ENCODE measurements at regions of chr1 and their contacts with region 1.

Region 1: DNA sequence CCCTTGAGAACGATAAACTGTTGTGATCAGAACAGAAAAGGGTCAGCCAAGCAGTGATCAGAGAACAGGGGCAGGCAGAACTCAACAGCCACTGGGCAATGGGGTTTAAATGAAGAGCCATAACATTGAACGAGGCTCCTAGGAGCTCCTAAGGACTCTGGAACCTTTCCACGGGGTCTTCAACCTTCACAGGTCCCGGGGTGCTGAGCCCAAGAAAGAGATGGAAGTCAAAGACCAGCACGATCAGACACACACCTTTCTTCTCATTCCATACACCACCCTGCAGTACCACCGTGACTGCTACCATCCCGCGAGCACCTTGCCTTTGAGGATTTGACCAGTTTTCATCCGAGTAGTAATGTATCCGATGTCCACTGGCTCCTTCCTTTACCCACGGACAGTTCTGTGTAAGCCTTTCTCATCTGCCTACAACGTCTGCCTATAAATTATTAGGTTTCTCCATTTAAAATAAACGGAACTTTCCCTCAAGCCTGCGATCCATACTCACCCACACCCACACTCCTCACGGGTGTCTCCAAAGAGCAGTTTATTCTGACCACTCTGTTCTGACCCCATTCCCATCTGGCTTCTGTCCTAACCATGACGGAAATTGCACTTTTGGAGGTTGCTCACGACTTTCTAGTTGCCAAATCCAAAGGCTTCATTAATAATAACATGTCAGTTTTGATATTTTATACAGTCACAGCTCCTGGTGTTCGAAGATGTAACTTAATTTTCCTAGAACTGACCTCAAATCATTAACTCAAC is 16.8 kb upstream of the HHAT start:
- DNase-seq: no peak
- H3K4me3 ChIP-seq: peak overlapping the region in 1 of 3 donors; percentile 36
- H3K27ac ChIP-seq: peak overlapping the region in 1 of 3 donors; percentile 13
- H3K4me1 ChIP-seq: peaks cover 0 to 10% of the 10 kb centered on the region in 2 donors
- H3K27me3 ChIP-seq: no peaks in the 10 kb centered on the region
- CTCF ChIP-seq: no peak
- POLR2A ChIP-seq: no peak

Region 2: GRCh38 chr1:210143465-210144062 is 168.3 kb before region 1 on chr1:
- intact Hi-C with region 1: loop called (anchors 5 kb)
- DNase-seq: peak; percentile 78 to 81
- H3K4me3 ChIP-seq: no peak overlapping the region
- H3K27ac ChIP-seq: no peak overlapping the region
- H3K4me1 ChIP-seq: no peaks in the 10 kb centered on the region
- H3K27me3 ChIP-seq: no peaks in the 10 kb centered on the region
- CTCF ChIP-seq: peak; percentile 11 to 69 (median 49)
- POLR2A ChIP-seq: no peak

Region 3: DNA sequence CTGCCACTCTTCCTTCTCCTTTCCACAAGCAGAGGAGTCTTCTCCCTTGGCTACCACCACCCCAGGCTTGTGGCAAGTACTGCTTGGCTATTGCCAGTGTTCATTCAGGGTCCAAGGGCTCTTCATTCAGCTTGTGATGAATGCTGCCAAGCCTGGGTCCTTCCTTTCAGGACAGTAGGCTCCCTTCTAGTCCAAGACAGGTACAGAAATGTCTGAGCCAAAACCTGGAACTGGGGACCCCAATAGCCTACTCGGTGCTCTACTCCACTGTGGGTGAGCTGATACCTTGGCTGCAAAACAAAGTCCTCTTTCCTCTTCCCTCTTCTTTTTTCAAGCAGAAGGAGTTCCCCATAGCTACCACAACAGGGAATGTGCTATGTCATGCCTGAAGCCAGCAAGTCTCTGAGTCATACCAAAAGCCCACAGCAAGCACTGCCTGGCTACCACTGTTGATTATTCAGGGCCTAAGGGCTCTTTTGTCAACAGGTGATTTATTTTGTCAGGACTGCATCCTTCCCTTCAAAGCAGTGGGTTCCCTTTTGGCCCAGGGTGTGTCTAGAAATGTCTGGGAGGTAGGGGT is 285.7 kb after region 1 on chr1:
- intact Hi-C with region 1: no loop called
- DNase-seq: peak; percentile 25 to 36
- H3K4me3 ChIP-seq: no peak overlapping the region
- H3K27ac ChIP-seq: peak overlapping the region in 2 of 3 donors; percentile 27 to 56
- H3K4me1 ChIP-seq: peaks cover 0 to 15% of the 10 kb centered on the region in 2 donors
- H3K27me3 ChIP-seq: no peaks in the 10 kb centered on the region
- CTCF ChIP-seq: no peak
- POLR2A ChIP-seq: no peak